ENCODE measurements at regions of chr19 and their contacts with region 1.

Region 1: DNA sequence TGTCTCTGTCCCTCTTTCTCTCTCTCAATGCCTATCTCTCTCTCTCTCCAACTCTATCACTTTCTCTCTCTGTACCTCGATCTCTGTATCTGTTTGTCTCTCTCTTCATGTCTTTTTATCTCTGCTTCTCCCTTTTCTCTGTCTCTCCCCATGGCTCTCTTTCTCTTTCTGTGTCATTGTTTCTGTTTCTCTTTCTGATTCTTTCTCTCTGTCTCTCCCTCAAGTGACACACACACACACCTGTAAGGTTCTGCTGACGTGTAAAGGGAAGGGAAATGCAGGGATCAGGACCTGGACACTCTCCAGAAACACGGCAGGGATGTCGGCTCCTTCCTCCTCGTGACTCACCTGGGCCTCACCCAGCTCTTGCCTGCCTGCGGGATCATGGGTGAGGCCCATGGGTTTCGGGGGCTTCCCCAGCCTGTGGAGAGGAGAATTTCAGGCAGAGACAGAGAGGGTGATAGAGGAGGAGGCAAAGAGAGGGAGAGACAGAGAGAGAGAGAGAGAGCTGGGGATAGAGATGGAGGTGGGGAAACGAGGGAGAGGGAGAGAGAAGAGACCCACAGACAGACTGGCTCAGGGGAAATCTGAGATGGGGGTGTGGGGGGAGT is 5.4 kb upstream of the PLAUR start:
- DNase-seq: no peak
- H3K4me3 ChIP-seq: no peak overlapping the region
- H3K27ac ChIP-seq: no peak overlapping the region
- H3K27me3 ChIP-seq: no peaks in the 10 kb centered on the region
- CTCF ChIP-seq: no peak

Region 2: GRCh38 chr19:43690444-43690843 is 15.1 kb after region 1 on chr19:
- CTCF ChIA-PET with region 1: no interaction called
- POLR2A ChIA-PET with region 1: interaction called, 10 read pairs
- DNase-seq: no peak
- H3K4me3 ChIP-seq: no peak overlapping the region
- H3K27ac ChIP-seq: no peak overlapping the region
- H3K27me3 ChIP-seq: peaks cover 3% of the 10 kb centered on the region
- CTCF ChIP-seq: no peak